T-cell (primary cell): ENCODE measurements at regions of chr2 and their contacts with region 1.

Region 1: DNA sequence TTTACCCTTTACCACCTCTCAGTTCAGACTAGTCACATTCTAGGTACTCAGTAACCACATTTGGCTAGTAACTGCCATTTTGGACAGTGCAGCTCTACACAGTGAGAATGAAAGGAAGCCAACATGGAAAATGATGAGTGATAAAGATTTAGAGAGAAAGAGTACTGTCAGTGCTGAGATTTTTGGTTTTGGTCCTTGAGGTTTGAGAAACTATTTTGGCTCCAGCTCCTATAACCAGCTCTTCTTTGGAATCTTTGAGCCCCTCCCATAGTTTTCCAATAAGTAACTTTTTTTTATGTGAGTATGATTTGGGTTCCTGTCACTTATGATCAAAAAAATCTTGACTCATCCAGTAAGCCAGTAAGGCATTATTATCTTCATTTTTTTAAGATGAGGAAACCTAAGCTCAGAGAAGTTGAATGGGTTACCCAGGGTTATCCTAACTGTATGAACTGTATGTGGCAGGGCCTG is 173.0 kb downstream of the BABAM2 start:
- DNase-seq: no peak
- ATAC-seq: no peak
- H3K4me3 ChIP-seq: no peak overlapping the region
- H3K4me3 Mint-ChIP-seq: no peak overlapping the region
- H3K27ac ChIP-seq: no peak overlapping the region
- H3K27ac Mint-ChIP-seq: no peak overlapping the region
- H3K4me1 ChIP-seq: no peaks in the 10 kb centered on the region
- H3K4me1 Mint-ChIP-seq: no peaks in the 10 kb centered on the region
- H3K27me3 ChIP-seq: no peaks in the 10 kb centered on the region
- H3K27me3 Mint-ChIP-seq: no peaks in the 10 kb centered on the region

Region 2: DNA sequence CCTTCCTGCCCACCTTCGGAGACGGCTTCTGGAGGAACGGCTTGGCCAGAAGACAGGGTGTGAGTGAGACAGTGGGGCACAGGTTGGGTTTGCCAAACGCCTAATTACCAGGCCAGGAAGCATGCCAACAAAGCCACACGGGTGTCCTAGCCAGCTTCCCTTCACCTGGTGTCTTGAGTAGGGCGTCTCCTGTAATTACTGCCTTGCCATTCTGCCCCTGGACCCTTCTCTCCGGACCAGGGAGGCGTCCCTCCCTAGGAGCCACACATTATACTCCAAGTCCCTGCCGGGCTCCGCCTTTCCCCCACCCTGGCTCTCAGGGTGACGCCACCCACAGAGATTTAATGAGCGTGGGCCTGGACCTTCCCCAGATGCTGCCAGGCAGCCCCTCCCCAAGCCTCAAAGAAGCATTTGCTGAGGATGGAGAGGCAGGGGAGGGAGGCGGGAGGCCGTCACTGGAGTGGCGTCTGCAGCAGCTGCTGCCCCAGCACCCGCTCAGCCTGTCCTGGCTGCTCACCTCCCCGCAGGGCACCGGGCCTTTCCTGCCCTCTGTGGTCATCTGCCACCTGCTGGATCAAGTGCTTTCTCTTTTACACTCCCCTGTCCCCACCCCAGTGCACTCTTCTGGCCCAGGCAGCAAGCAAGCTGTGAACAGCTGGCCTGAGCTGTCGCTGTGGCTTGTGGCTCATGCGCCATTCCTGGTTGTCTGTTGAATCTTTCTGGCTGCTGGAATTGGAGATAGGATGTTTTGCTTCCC is 349.8 kb after region 1 on chr2:
- CTCF ChIA-PET with region 1: no interaction called
- POLR2A ChIA-PET with region 1: interaction called in 1 of 2 experiments, 13 read pairs
- DNase-seq: peak in 1 of 35 experiments; percentile 19
- ATAC-seq: no peak
- H3K4me3 ChIP-seq: no peak overlapping the region
- H3K4me3 Mint-ChIP-seq: peak overlapping the region in 1 of 3 donors; percentile 25
- H3K27ac ChIP-seq: no peak overlapping the region
- H3K27ac Mint-ChIP-seq: no peak overlapping the region
- H3K4me1 ChIP-seq: peaks cover 16 to 56% of the 10 kb centered on the region in 2 experiments
- H3K4me1 Mint-ChIP-seq: peaks cover 33 to 42% (median 40%) of the 10 kb centered on the region in 3 donors
- H3K27me3 ChIP-seq: no peaks in the 10 kb centered on the region
- H3K27me3 Mint-ChIP-seq: no peaks in the 10 kb centered on the region